Motor neuron (in vitro differentiated cells): ENCODE measurements at regions of chr3 and their contacts with region 1.

Region 1: GRCh38 chr3:72265256-72266015 is 480.5 kb upstream of the PROK2 start:
- ATAC-seq: peak in 3 of 8 experiments; percentile 19 to 53 (median 23)
- H3K4me3 ChIP-seq: no peak overlapping the region
- H3K27ac ChIP-seq: no peak overlapping the region
- H3K4me1 ChIP-seq: peaks cover 17 to 18% of the 10 kb centered on the region in 2 donors

Region 2: DNA sequence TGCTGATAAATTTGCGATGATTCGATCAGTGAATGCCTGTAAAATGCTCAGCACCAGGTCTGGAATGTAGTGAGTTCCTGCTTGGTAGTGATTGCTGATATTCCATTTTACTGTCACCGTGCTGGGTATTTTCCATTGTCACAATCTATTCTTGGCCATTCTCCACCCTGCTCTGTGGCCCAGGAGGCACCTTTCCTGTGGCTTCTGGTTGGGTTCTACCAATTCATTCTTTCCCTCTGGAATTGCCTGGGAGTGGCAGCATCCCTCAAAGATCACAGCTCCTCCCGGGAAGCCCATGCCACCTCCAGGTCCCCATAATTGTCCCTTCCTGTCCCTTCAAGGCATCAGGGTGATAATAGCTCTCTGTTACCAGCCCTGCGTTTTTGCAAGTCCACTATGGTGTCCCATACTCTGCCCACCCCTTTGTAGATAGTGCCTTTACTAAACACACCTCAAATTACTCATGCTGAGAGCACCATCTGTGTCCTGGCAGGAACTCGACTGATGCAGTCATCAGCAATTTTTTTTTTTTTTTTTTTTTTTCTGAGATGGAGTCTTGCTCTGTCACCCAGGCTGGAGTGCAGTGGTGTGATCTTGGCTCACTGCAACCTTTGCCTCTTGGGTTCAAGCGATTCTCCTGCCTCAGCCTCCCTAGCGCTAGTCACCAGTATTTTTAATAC is 302.7 kb before region 1 on chr3:
- in situ Hi-C with region 1: loop called in 1 of 9 experiments (anchors 10 kb)
- ATAC-seq: peak in 6 of 8 experiments; percentile 71 to 97 (median 90)
- H3K4me3 ChIP-seq: no peak overlapping the region
- H3K27ac ChIP-seq: no peak overlapping the region
- H3K4me1 ChIP-seq: peaks cover 0 to 4% of the 10 kb centered on the region in 2 donors